ENCODE measurements at regions of chr7 and their contacts with region 1.

Region 1: DNA sequence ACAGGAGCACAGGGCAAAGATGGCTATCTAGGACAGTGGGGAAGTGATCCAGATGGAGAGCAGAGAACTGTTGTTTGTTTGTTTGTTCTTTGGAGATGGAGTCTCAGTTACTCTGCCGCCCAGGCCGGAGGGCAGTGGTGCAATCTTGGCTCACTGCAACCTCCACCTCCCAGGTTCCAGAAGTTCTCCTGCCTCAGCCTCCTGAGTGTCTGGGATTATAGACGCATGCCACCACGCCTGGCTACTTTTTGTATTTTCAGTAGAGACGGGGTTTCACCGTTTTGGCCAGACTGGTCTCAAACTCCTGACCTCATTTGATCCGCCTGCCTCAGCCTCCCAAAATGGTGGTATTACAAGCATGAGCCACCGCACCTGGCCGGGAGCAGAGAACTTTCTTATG is 20.9 kb downstream of the METTL2B start:
- DNase-seq: no peak
- ATAC-seq: no peak
- H3K4me3 ChIP-seq: no peak overlapping the region
- H3K4me3 Mint-ChIP-seq: no peak overlapping the region
- H3K27ac ChIP-seq: no peak overlapping the region
- H3K27ac Mint-ChIP-seq: no peak overlapping the region
- H3K4me1 ChIP-seq: no peaks in the 10 kb centered on the region
- H3K4me1 Mint-ChIP-seq: no peaks in the 10 kb centered on the region
- H3K27me3 ChIP-seq: no peaks in the 10 kb centered on the region
- H3K27me3 Mint-ChIP-seq: no peaks in the 10 kb centered on the region
- CTCF ChIP-seq: no peak

Region 2: GRCh38 chr7:128459394-128459878 is 38.0 kb before region 1 on chr7:
- CTCF ChIA-PET with region 1: no interaction called
- POLR2A ChIA-PET with region 1: no interaction called
- intact Hi-C with region 1: no loop called
- DNase-seq: peak; percentile 43 to 88 (median 69)
- ATAC-seq: peak; percentile 58
- H3K4me3 ChIP-seq: no peak overlapping the region
- H3K4me3 Mint-ChIP-seq: no peak overlapping the region
- H3K27ac ChIP-seq: no peak overlapping the region
- H3K27ac Mint-ChIP-seq: peak overlapping the region; percentile 55
- H3K4me1 ChIP-seq: peaks cover 19% of the 10 kb centered on the region
- H3K4me1 Mint-ChIP-seq: peaks cover 26% of the 10 kb centered on the region
- H3K27me3 ChIP-seq: no peaks in the 10 kb centered on the region
- H3K27me3 Mint-ChIP-seq: no peaks in the 10 kb centered on the region
- CTCF ChIP-seq: peak; percentile 69

Region 3: DNA sequence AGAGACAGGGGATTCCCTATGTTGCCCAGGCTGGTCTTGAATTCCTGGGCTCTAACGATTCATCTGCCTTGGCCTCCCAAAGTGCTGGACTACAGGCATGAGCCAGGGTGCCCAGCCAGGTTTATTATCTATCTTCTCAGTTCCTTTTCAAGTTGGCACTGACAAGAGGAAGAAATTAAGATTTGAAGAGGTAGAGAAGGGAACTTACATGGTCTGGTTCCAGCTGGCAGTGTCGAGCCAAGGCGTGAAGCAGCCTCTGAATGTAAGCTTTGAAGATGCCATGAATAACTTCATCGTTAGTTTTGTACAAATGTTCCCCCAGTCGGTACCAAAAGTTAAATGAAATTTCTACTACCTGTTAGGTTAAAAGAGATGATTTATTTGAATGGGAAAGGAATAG is 499.8 kb after region 1 on chr7:
- CTCF ChIA-PET with region 1: no interaction called
- POLR2A ChIA-PET with region 1: no interaction called
- intact Hi-C with region 1: loop called in 1 of 2 experiments (anchors 5 kb)
- DNase-seq: no peak
- ATAC-seq: no peak
- H3K4me3 ChIP-seq: no peak overlapping the region
- H3K4me3 Mint-ChIP-seq: no peak overlapping the region
- H3K27ac ChIP-seq: no peak overlapping the region
- H3K27ac Mint-ChIP-seq: no peak overlapping the region
- H3K4me1 ChIP-seq: no peaks in the 10 kb centered on the region
- H3K4me1 Mint-ChIP-seq: no peaks in the 10 kb centered on the region
- H3K27me3 ChIP-seq: no peaks in the 10 kb centered on the region
- H3K27me3 Mint-ChIP-seq: no peaks in the 10 kb centered on the region
- CTCF ChIP-seq: no peak

Measured in CD8-positive, alpha-beta T cell (primary cell).